B cell (primary cell): ENCODE measurements at regions of chr10 and their contacts with region 1.

Region 1: DNA sequence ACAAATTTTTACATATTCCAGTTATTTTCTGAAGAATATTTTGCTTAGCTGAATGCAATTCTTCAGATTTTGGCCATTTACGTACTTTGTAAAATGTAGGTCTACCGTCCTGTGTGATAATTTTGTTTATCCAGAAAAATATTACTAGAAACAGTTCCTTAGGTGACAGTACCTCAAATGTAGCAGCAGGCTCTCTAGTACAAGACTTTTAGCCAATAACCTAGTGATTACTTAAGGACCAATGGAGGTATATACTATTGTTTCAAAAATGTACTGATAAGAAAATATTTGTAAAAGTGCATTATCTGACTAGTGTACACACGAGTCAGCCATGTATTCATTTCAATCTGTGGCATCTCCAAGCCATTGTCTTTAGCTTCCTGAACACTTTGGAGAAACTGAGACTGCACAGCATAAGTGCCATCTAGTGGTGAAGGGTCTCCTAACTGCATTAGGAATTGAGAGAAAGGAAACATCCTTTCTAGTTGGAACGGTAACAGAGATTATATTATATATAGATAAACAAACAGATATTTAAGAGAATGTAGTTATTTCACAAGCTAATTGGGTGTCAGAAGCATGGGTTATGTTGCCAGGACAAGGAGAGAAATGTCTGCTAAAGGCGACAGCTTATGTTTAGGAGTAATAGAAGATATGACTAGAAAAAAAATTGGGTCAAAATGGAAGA is 23.7 kb downstream of the RTKN2 start:
- DNase-seq: peak; percentile 78
- ATAC-seq: peak; percentile 70
- H3K4me3 ChIP-seq: peak overlapping the region in 1 of 5 experiments; percentile 39
- H3K4me3 Mint-ChIP-seq: peak overlapping the region; percentile 8
- H3K27ac ChIP-seq: peak overlapping the region; percentile 87 to 93
- H3K27ac Mint-ChIP-seq: peak overlapping the region; percentile 61
- H3K4me1 ChIP-seq: peaks cover 31 to 40% of the 10 kb centered on the region in 2 donors
- H3K4me1 Mint-ChIP-seq: peaks cover 35% of the 10 kb centered on the region
- H3K27me3 ChIP-seq: no peaks in the 10 kb centered on the region
- H3K27me3 Mint-ChIP-seq: no peaks in the 10 kb centered on the region
- CTCF ChIP-seq: peak; percentile 84

Region 2: DNA sequence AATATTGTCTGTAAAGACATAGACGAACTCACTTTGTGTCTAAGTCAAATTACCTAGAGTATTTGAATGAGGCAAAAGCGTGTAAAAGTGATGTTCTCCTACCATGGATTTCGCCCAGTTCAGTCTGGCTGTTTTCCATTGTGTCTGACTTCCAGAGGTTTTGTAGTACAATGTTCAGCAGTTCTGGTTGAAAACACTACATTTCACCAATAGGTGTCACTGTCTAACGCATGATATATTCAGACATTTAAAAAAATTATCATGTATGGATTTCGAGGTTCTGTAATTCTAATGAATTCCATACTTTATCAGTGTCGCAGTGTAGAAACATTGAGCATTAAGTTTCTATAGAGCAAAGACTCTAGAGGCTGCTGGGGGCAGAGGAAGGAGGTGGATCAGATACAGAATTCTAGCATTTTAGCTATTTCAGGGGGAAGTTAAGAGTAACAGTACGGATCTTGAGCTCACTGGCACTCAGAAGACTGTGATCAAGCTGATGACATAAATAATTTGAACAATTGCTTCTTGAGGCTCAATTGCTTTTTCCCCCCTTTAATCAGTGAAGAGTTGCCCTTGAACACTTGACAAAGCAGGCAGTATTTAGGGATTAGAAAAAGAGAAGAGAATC is 1104.0 kb before region 1 on chr10:
- CTCF ChIA-PET with region 1: interaction called, 4 read pairs
- POLR2A ChIA-PET with region 1: no interaction called
- intact Hi-C with region 1: loop called (anchors 1 kb)
- DNase-seq: peak; percentile 63
- ATAC-seq: peak; percentile 33
- H3K4me3 ChIP-seq: no peak overlapping the region
- H3K4me3 Mint-ChIP-seq: no peak overlapping the region
- H3K27ac ChIP-seq: no peak overlapping the region
- H3K27ac Mint-ChIP-seq: no peak overlapping the region
- H3K4me1 ChIP-seq: peaks cover 17 to 18% of the 10 kb centered on the region in 2 donors
- H3K4me1 Mint-ChIP-seq: peaks cover 25% of the 10 kb centered on the region
- H3K27me3 ChIP-seq: no peaks in the 10 kb centered on the region
- H3K27me3 Mint-ChIP-seq: peaks cover 4% of the 10 kb centered on the region
- CTCF ChIP-seq: peak; percentile 84

Region 3: DNA sequence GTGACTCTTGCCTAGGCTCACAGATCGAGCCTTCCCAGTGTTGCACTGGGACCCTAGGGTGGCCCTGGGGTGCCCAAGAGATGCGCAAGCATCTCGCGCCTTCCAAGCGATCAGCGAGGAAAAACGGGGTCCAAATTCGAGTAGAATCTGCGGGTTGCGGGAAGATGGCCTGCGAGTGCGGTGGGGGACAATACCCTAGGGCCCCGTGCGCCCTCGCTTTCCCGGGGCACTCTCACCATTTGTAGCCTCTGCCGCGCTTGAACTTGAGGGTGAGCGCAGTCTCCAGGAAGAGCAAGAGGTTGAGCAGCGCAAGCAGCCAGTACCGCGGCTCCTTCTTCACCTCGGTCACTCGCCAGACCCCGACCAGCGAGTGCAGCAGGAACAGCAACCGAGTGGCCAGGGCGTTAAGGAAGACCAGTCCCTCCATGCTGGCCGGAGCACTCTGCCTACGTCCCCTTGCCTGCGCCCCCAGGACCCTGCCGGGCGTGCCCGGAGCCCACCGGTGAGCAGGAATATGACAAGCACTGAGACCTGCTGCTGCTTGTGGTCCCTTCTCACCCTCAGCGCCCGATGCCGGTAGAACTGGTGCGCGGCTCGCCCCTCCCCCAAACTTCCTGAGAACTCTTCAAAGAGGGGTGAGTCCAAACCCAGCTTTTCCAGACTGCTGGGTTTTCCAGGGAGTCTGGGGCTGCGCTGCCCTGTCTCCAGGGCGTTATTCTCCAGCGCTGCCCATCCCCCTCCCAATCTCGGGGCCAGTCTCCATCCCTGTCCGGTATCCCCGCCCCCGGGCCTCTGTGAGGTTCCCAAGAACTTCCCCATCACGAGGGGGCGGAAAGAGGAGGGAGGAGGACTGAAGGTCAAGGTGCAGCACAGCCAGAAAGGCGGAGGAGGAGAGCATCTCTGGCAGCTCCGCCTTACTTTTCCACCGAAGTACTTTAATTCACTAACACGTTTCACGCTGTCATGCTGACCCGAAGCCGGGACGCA is 792.0 kb before region 1 on chr10 and contains the start of gene TMEM26:
- CTCF ChIA-PET with region 1: no interaction called
- POLR2A ChIA-PET with region 1: no interaction called
- intact Hi-C with region 1: no loop called
- DNase-seq: peak; percentile 5
- ATAC-seq: no peak
- H3K4me3 ChIP-seq: no peak within 1 kb of the TSS
- H3K4me3 Mint-ChIP-seq: peak within 1 kb of the TSS; percentile 28
- H3K27ac ChIP-seq: no peak within 1 kb of the TSS
- H3K27ac Mint-ChIP-seq: no peak within 1 kb of the TSS
- H3K4me1 ChIP-seq: peaks cover 9 to 13% of the 10 kb centered on the region in 2 donors
- H3K4me1 Mint-ChIP-seq: peaks cover 10% of the 10 kb centered on the region
- H3K27me3 ChIP-seq: peaks cover 0 to 22% (median 12%) of the 10 kb centered on the region in 4 experiments
- H3K27me3 Mint-ChIP-seq: peaks cover 54% of the 10 kb centered on the region
- CTCF ChIP-seq: no peak
- total RNA-seq, gene TMEM26: not detected in 2 replicates

Region 4: GRCh38 chr10:61896854-61897661 is 347.9 kb before region 1 on chr10:
- CTCF ChIA-PET with region 1: interaction called, 34 read pairs
- POLR2A ChIA-PET with region 1: no interaction called
- intact Hi-C with region 1: loop called (anchors 1 kb)
- DNase-seq: peak; percentile 91
- ATAC-seq: peak; percentile 64
- H3K4me3 ChIP-seq: peak overlapping the region in 4 of 5 experiments; percentile 27 to 60 (median 48)
- H3K4me3 Mint-ChIP-seq: peak overlapping the region; percentile 98
- H3K27ac ChIP-seq: peak overlapping the region; percentile 38 to 47
- H3K27ac Mint-ChIP-seq: peak overlapping the region; percentile 94
- H3K4me1 ChIP-seq: peaks cover 29 to 33% of the 10 kb centered on the region in 2 donors
- H3K4me1 Mint-ChIP-seq: peaks cover 35% of the 10 kb centered on the region
- H3K27me3 ChIP-seq: no peaks in the 10 kb centered on the region
- H3K27me3 Mint-ChIP-seq: no peaks in the 10 kb centered on the region
- CTCF ChIP-seq: peak; percentile 77

Region 5: GRCh38 chr10:62016623-62017490 is 228.1 kb before region 1 on chr10:
- CTCF ChIA-PET with region 1: interaction called, 18 read pairs
- POLR2A ChIA-PET with region 1: no interaction called
- intact Hi-C with region 1: no loop called
- DNase-seq: peak; percentile 88
- ATAC-seq: peak; percentile 71
- H3K4me3 ChIP-seq: peak overlapping the region in 3 of 5 experiments; percentile 10 to 50 (median 11)
- H3K4me3 Mint-ChIP-seq: peak overlapping the region; percentile 76
- H3K27ac ChIP-seq: peak overlapping the region; percentile 94 to 98
- H3K27ac Mint-ChIP-seq: peak overlapping the region; percentile 93
- H3K4me1 ChIP-seq: peaks cover 75 to 76% of the 10 kb centered on the region in 2 donors
- H3K4me1 Mint-ChIP-seq: peaks cover 80% of the 10 kb centered on the region
- H3K27me3 ChIP-seq: no peaks in the 10 kb centered on the region
- H3K27me3 Mint-ChIP-seq: no peaks in the 10 kb centered on the region
- CTCF ChIP-seq: no peak

Region 6: DNA sequence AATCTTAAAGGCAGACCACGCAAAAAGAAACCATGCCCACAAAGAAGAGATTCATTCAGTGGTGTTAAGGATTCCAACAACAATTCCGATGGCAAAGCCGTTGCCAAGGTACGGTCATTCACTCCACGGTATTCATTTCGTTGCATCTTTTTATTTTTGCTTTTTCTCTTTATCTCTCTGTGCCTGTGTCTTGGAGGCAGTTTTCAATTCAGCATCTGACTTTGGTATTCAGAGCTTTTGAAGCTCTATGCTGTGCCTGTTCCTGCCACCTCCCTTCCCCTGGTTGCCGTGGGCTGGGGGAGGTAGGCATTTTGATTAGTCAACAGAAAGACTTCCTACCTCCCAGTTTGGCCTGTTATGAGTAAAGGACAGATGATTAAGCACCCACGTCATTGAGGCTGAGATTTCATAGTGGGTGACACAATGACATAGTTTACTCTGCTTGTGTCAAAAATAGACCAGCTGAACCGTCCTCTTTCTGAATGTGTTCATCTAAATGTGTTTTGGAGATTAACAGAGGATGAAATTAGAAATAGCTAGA is 194.0 kb before region 1 on chr10:
- CTCF ChIA-PET with region 1: interaction called, 184 read pairs
- POLR2A ChIA-PET with region 1: interaction called, 3 read pairs
- intact Hi-C with region 1: no loop called
- DNase-seq: peak; percentile 82
- ATAC-seq: peak; percentile 69
- H3K4me3 ChIP-seq: peak overlapping the region in 4 of 5 experiments; percentile 39 to 60 (median 44)
- H3K4me3 Mint-ChIP-seq: peak overlapping the region; percentile 85
- H3K27ac ChIP-seq: peak overlapping the region; percentile 85 to 92
- H3K27ac Mint-ChIP-seq: peak overlapping the region; percentile 86
- H3K4me1 ChIP-seq: peaks cover 92 to 96% of the 10 kb centered on the region in 2 donors
- H3K4me1 Mint-ChIP-seq: peaks cover 96% of the 10 kb centered on the region
- H3K27me3 ChIP-seq: no peaks in the 10 kb centered on the region
- H3K27me3 Mint-ChIP-seq: no peaks in the 10 kb centered on the region
- CTCF ChIP-seq: no peak

Region 7: GRCh38 chr10:62109587-62110293 is 135.2 kb before region 1 on chr10:
- CTCF ChIA-PET with region 1: interaction called, 4 read pairs
- POLR2A ChIA-PET with region 1: no interaction called
- intact Hi-C with region 1: loop called (anchors 2 kb)
- DNase-seq: peak; percentile 82
- ATAC-seq: peak; percentile 82
- H3K4me3 ChIP-seq: peak overlapping the region in 1 of 5 experiments; percentile 6
- H3K4me3 Mint-ChIP-seq: peak overlapping the region; percentile 18
- H3K27ac ChIP-seq: peak overlapping the region; percentile 66 to 69
- H3K27ac Mint-ChIP-seq: peak overlapping the region; percentile 54
- H3K4me1 ChIP-seq: peaks cover 52 to 65% of the 10 kb centered on the region in 2 donors
- H3K4me1 Mint-ChIP-seq: peaks cover 65% of the 10 kb centered on the region
- H3K27me3 ChIP-seq: no peaks in the 10 kb centered on the region
- H3K27me3 Mint-ChIP-seq: no peaks in the 10 kb centered on the region
- CTCF ChIP-seq: no peak

Region 8: GRCh38 chr10:62528441-62528840 is 283.5 kb after region 1 on chr10:
- CTCF ChIA-PET with region 1: no interaction called
- POLR2A ChIA-PET with region 1: no interaction called
- intact Hi-C with region 1: loop called (anchors 10 kb)
- DNase-seq: peak; percentile 77
- ATAC-seq: peak; percentile 64
- H3K4me3 ChIP-seq: peak overlapping the region in 1 of 5 experiments; percentile 38
- H3K4me3 Mint-ChIP-seq: peak overlapping the region; percentile 66
- H3K27ac ChIP-seq: peak overlapping the region; percentile 84 to 90
- H3K27ac Mint-ChIP-seq: peak overlapping the region; percentile 96
- H3K4me1 ChIP-seq: peaks cover 47 to 51% of the 10 kb centered on the region in 2 donors
- H3K4me1 Mint-ChIP-seq: peaks cover 62% of the 10 kb centered on the region
- H3K27me3 ChIP-seq: no peaks in the 10 kb centered on the region
- H3K27me3 Mint-ChIP-seq: no peaks in the 10 kb centered on the region
- CTCF ChIP-seq: no peak